CD4-positive, alpha-beta T cell (primary cell): ENCODE measurements at regions of chr15 and their contacts with region 1.

Region 1: GRCh38 chr15:26729581-26729980 is 43.3 kb downstream of the GABRB3 start:
- DNase-seq: no peak
- ATAC-seq: no peak
- H3K4me3 ChIP-seq: no peak overlapping the region
- H3K4me3 Mint-ChIP-seq: no peak overlapping the region
- H3K27ac ChIP-seq: no peak overlapping the region
- H3K27ac Mint-ChIP-seq: no peak overlapping the region
- H3K4me1 ChIP-seq: no peaks in the 10 kb centered on the region
- H3K4me1 Mint-ChIP-seq: no peaks in the 10 kb centered on the region
- H3K27me3 ChIP-seq: no peaks in the 10 kb centered on the region
- H3K27me3 Mint-ChIP-seq: no peaks in the 10 kb centered on the region
- CTCF ChIP-seq: no peak

Region 2: DNA sequence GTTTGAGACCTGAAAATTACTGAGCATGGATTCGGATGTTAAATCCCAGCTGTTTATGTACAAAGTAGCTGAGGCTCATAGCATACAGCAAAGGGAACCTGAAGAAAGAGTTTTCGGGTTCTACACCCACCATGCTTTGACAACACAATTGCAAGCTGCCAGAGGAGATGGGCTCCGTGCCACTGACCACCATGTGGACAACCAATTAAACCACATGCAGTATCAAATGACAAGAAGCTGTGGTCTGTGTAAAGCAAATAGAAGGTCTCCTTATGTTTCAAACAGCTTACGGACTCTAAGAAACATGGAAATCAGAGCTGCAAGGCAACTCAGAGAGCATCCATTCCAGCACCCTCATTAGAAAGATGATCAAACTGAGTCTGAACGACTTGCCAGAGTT is 30.4 kb after region 1 on chr15:
- CTCF ChIA-PET with region 1: no interaction called
- POLR2A ChIA-PET with region 1: no interaction called
- intact Hi-C with region 1: loop called in 1 of 2 experiments (anchors 2 kb)
- DNase-seq: no peak
- ATAC-seq: no peak
- H3K4me3 ChIP-seq: no peak overlapping the region
- H3K4me3 Mint-ChIP-seq: no peak overlapping the region
- H3K27ac ChIP-seq: no peak overlapping the region
- H3K27ac Mint-ChIP-seq: no peak overlapping the region
- H3K4me1 ChIP-seq: no peaks in the 10 kb centered on the region
- H3K4me1 Mint-ChIP-seq: no peaks in the 10 kb centered on the region
- H3K27me3 ChIP-seq: no peaks in the 10 kb centered on the region
- H3K27me3 Mint-ChIP-seq: no peaks in the 10 kb centered on the region
- CTCF ChIP-seq: no peak